Mammary epithelial cell (primary cell): ENCODE measurements at regions of chr5 and their contacts with region 1.

Region 1: DNA sequence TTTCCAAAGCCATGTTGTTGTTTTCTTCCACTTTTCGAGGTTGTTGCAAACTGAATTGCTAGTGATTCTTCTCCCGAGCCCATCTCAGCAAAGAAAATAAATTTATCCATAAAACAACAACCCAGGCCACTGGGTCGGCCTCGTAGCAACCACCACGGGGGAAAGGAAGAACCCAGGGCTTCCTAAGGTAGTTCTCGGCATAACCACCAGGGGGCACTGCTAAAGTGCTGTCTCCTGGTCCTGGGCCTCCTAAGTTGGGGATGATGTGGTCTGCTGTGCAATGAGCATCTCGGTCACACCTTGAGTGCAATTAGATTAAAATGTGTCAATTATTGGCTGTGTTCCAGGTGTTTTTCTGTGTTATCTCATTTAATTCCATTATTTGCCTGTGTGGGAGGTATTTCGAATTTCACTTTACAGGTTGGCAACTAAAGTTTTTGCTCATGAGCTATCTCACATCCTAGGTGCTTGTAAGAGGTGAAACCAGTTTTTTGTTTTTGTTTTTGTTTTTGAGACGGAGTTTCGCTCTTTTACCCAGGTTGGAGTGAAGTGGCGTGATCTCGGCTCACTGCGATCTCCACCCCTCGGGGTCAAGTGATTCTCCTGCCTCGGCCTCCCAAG is 102.8 kb upstream of the DAP start:
- DNase-seq: peak; percentile 17
- H3K4me3 ChIP-seq: no peak overlapping the region
- H3K27ac ChIP-seq: no peak overlapping the region
- H3K4me1 ChIP-seq: no peaks in the 10 kb centered on the region
- H3K27me3 ChIP-seq: no peaks in the 10 kb centered on the region
- CTCF ChIP-seq: peak; percentile 80 to 87

Region 2: DNA sequence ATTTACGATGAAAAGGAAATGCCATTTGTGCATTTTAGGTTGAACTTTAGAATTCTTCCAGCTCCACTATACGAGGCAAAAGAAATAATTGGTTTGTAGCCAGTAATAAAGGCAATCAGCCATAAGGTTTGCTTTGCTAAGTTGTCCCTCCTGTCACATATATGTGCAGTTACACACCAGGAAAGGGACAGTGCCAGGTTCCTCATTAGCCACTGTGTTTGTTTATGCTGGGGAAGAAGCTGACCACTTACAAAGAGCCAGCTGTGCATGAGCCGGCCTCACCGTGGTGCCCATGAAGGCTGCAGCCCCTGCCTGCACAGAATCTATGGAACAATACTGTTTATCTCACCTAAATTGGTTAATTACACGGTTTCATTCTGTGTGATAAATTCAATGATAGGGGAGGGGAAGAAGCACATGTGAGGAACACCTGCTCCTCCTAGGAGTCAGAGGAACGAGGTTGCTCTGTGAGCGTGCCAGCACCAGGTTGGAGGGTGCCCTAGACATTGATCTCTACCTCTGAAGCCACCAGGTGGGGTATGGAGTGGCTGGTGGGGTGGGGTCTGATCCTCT is 71.0 kb after region 1 on chr5:
- CTCF ChIA-PET with region 1: no interaction called
- dilution Hi-C with region 1: loop called (anchors 10 kb)
- in situ Hi-C with region 1: no loop called
- intact Hi-C with region 1: no loop called
- DNase-seq: no peak
- H3K4me3 ChIP-seq: no peak overlapping the region
- H3K27ac ChIP-seq: no peak overlapping the region
- H3K4me1 ChIP-seq: no peaks in the 10 kb centered on the region
- H3K27me3 ChIP-seq: no peaks in the 10 kb centered on the region
- CTCF ChIP-seq: no peak